GM12878 (cell line): ENCODE measurements at regions of chr3 and their contacts with region 1.

Region 1: DNA sequence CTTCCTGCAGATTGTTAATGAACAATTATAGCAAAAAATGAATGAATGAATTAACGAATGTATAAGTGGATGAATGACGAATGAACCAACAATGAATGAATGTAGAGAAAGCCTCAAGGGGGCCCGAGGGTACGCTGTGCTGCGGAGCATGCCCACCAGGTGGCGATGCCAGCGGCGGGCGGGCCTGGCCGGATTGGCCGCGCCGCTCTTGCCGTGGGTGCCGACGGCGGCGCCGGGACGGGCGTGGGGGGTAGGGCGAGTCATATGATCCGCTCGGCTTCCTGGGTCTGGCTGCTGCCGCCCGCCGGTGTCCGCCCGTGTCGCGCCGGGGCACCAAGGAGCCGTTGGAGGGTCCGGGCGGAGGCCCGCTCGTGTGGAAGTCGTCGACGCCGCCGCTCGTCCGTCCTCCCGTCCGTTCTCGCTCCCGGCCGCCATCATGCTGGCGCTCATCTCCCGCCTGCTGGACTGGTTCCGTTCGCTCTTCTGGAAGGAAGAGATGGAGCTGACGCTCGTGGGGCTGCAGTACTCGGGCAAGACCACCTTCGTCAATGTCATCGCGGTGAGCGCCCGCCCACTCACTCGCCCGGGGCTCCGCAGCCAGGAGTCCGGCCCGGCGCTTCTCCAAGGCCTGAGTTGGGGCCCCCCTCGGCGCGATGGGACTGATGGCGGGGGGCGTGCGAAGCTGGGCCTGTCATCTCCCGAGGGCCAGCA is at the start of gene ARL8B:
- DNase-seq: no peak
- ATAC-seq: peak; percentile 97
- H3K4me3 ChIP-seq: peak within 1 kb of the TSS; percentile 76
- H3K27ac ChIP-seq: peak within 1 kb of the TSS; percentile 78
- H3K4me1 ChIP-seq: no peaks in the 10 kb centered on the region
- H3K27me3 ChIP-seq: no peaks in the 10 kb centered on the region
- CTCF ChIP-seq: peak; percentile 88 to 99 (median 97); a peak in 5 of 6 replicates
- EP300 ChIP-seq: peak; percentile 36 to 66; a peak in 2 of 4 replicates
- POLR2A ChIP-seq: peak; percentile 98
- RAD21 ChIP-seq: peak; percentile 51; the same call in 1 of the 2 replicates
- polyA plus RNA-seq, gene ARL8B: 36.5 to 38.5 TPM

Region 2: GRCh38 chr3:5205165-5205941 is 83.2 kb after region 1 on chr3:
- CTCF ChIA-PET with region 1: interaction called, 3 read pairs
- POLR2A ChIA-PET with region 1: interaction called, 10 read pairs
- RAD21 ChIA-PET with region 1: interaction called, 6 read pairs
- SMC1A ChIA-PET with region 1: interaction called, 3 read pairs
- in situ Hi-C with region 1: no loop called
- intact Hi-C with region 1: no loop called
- DNase-seq: peak; percentile 86
- ATAC-seq: peak; percentile 98
- H3K4me3 ChIP-seq: no peak overlapping the region
- H3K27ac ChIP-seq: peak overlapping the region; percentile 38
- H3K4me1 ChIP-seq: peaks cover 9% of the 10 kb centered on the region
- H3K27me3 ChIP-seq: no peaks in the 10 kb centered on the region
- CTCF ChIP-seq: no peak
- EP300 ChIP-seq: peak; percentile 62 to 88; a peak in 3 of 4 replicates
- POLR2A ChIP-seq: 0 out of 2 replicates have a peak, but pooled peaks have one; percentile 40
- RAD21 ChIP-seq: peak; percentile 29; the same call in 1 of the 2 replicates

Region 3: GRCh38 chr3:5505163-5505562 is 383.0 kb after region 1 on chr3:
- CTCF ChIA-PET with region 1: no interaction called
- POLR2A ChIA-PET with region 1: no interaction called
- RAD21 ChIA-PET with region 1: no interaction called
- SMC1A ChIA-PET with region 1: no interaction called
- in situ Hi-C with region 1: no loop called
- intact Hi-C with region 1: no loop called
- DNase-seq: no peak
- ATAC-seq: no peak
- H3K4me3 ChIP-seq: no peak overlapping the region
- H3K27ac ChIP-seq: no peak overlapping the region
- H3K4me1 ChIP-seq: peaks cover 1% of the 10 kb centered on the region
- H3K27me3 ChIP-seq: no peaks in the 10 kb centered on the region
- CTCF ChIP-seq: no peak
- EP300 ChIP-seq: no peak
- POLR2A ChIP-seq: no peak
- RAD21 ChIP-seq: no peak